Stomach (tissue), 19 donors: ENCODE measurements at regions of chr9 and their contacts with region 1.

Region 1: GRCh38 chr9:72349240-72349639 is 15.8 kb downstream of the ZFAND5 start:
- DNase-seq: no peak
- H3K4me3 ChIP-seq: no peak overlapping the region
- H3K27ac ChIP-seq: no peak overlapping the region
- H3K4me1 ChIP-seq: peaks cover 14 to 28% (median 19%) of the 10 kb centered on the region in 4 donors
- H3K27me3 ChIP-seq: no peaks in the 10 kb centered on the region
- CTCF ChIP-seq: no peak
- EP300 ChIP-seq: no peak
- POLR2A ChIP-seq: no peak

Region 2: GRCh38 chr9:72292256-72292682 is 57.0 kb before region 1 on chr9:
- intact Hi-C with region 1: loop called (anchors 10 kb)
- DNase-seq: peak in 1 of 2 donors; percentile 58
- H3K4me3 ChIP-seq: no peak overlapping the region
- H3K27ac ChIP-seq: peak overlapping the region in 4 of 5 donors; percentile 76 to 90 (median 84)
- H3K4me1 ChIP-seq: peaks cover 11 to 50% (median 40%) of the 10 kb centered on the region in 4 donors
- H3K27me3 ChIP-seq: no peaks in the 10 kb centered on the region
- CTCF ChIP-seq: peak in 5 of 7 experiments; percentile 27 to 64 (median 41)
- EP300 ChIP-seq: no peak
- POLR2A ChIP-seq: no peak

Region 3: GRCh38 chr9:72440378-72440777 is 91.1 kb after region 1 on chr9:
- intact Hi-C with region 1: no loop called
- DNase-seq: no peak
- H3K4me3 ChIP-seq: no peak overlapping the region
- H3K27ac ChIP-seq: no peak overlapping the region
- H3K4me1 ChIP-seq: peaks cover 0 to 31% (median 0%) of the 10 kb centered on the region in 4 donors
- H3K27me3 ChIP-seq: no peaks in the 10 kb centered on the region
- CTCF ChIP-seq: no peak
- EP300 ChIP-seq: no peak
- POLR2A ChIP-seq: no peak